AG04450 (cell line): ENCODE measurements at regions of chr9 and their contacts with region 1.

Region 1: GRCh38 chr9:19748278-19749126 is 40.3 kb downstream of the SLC24A2 start:
- DNase-seq: no peak
- H3K4me3 ChIP-seq: no peak overlapping the region
- H3K27ac ChIP-seq: no peak overlapping the region
- H3K27me3 ChIP-seq: no peaks in the 10 kb centered on the region
- CTCF ChIP-seq: no peak

Region 2: DNA sequence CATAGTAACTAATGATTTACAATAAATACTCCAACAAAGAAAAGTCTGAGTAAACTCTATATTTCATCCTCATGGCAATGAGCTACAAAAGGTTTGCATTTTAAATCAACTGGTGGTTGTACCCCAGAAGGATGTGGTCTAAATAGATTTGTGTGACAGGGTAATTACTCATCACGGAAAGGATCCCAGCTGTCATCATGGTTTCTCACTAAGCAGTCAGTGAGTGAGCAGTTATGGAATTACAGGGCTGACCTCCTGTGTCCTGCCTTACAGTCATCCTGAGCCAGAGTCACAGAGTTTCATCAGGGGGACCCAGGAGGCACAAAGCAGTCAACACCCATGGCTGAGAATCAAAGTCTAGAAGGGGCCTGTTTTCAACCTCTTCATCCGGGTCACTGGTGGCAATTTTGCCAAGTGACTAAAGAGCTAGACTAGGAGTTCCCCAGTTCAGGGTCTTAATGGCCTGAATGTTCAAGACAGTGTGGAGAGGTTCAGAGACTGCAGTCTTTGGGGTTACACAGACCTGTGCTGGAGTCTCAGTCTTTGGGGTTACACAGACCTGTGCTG is 251.1 kb after region 1 on chr9:
- CTCF ChIA-PET with region 1: no interaction called
- POLR2A ChIA-PET with region 1: interaction called, 14 read pairs
- DNase-seq: no peak
- H3K4me3 ChIP-seq: no peak overlapping the region
- H3K27ac ChIP-seq: peak overlapping the region; percentile 12
- H3K27me3 ChIP-seq: no peaks in the 10 kb centered on the region
- CTCF ChIP-seq: no peak